ENCODE measurements at regions of chr12 and their contacts with region 1.

Region 1: GRCh38 chr12:96399919-96400797 is at the start of gene CDK17:
- DNase-seq: peak in 1 of 2 donors; percentile 90
- H3K4me3 ChIP-seq: peak within 1 kb of the TSS; percentile 84 to 88
- H3K27ac ChIP-seq: peak within 1 kb of the TSS; percentile 99
- H3K4me1 ChIP-seq: peaks cover 25% of the 10 kb centered on the region
- H3K27me3 ChIP-seq: no peaks in the 10 kb centered on the region
- CTCF ChIP-seq: peak in 2 of 3 experiments; percentile 40 to 50
- POLR2A ChIP-seq: peak in 1 of 2 donors; percentile 81
- total RNA-seq, gene CDK17: 72.4 TPM

Region 2: GRCh38 chr12:95460896-95461661 is 939.1 kb before region 1 on chr12:
- intact Hi-C with region 1: loop called (anchors 5 kb)
- DNase-seq: no peak
- H3K4me3 ChIP-seq: no peak overlapping the region
- H3K27ac ChIP-seq: no peak overlapping the region
- H3K4me1 ChIP-seq: no peaks in the 10 kb centered on the region
- H3K27me3 ChIP-seq: no peaks in the 10 kb centered on the region
- CTCF ChIP-seq: no peak
- POLR2A ChIP-seq: no peak

Region 3: DNA sequence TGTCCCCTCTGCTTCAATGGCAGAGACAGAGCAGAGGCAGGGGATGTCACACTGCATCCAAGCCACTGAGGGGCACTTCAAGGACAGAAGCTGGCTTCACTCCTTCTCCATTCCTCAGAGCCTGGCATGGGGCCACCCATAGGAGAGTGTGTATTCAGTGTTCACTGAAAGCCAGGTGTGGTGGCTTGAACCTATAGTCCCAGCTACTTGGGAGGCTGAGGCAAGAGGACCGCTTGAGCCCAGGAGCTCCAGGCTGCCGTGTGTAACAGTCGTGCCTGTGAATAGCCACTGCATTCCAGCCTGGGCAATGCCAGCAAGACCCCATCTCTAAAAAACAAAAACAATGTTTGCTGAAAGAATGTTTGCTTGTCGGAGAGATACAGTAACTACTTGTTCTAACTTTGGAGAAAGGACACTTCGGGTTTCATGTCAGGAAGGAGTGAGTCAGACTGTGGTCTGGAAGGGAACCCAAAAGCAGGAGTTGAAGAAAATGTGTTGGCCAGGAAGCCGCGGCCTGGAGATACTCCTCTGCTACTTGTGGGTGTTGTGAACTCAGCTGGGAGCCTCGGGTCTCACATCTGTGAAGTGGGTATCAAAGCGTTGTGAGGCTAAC is 162.6 kb before region 1 on chr12:
- intact Hi-C with region 1: loop called (anchors 10 kb)
- DNase-seq: no peak
- H3K4me3 ChIP-seq: peak overlapping the region in 1 of 2 donors; percentile 1
- H3K27ac ChIP-seq: peak overlapping the region; percentile 71
- H3K4me1 ChIP-seq: peaks cover 90% of the 10 kb centered on the region
- H3K27me3 ChIP-seq: no peaks in the 10 kb centered on the region
- CTCF ChIP-seq: no peak
- POLR2A ChIP-seq: no peak

Region 4: DNA sequence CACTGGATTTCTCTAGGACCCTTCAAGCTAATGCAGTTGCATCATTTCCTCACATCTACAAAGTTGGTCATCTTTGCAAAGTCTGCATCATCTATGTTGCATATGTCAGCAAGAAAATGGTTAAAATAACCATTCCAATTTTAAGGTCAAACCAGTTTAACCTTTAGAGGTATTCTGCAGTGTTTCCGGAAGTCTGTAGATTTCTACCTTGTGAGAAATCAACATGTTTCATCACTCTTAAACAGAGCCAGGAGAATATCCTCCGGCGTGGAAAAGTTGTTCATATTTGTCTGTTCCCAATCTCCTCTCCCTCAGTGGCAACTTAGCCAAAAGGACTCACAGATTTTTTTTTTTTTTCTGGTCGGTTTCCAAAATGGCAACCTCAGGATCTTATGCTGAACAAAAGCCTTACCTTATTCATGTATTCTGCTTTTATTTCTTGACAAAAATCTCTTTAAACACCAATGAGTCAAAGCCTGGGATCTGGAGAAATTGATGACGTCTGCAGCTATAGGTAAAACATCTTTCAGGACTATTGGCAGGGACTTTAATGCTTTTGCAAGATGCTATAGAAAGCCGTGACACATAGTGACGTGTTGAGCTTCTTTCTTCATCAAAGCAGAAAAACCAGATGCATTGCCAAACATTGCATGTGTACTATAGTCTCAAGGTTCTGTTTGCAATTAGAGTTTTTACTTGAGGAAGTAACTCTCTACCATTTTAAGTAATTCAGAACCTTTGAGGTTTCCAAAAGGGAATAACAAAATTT is 16.1 kb after region 1 on chr12:
- intact Hi-C with region 1: no loop called
- DNase-seq: no peak
- H3K4me3 ChIP-seq: no peak overlapping the region
- H3K27ac ChIP-seq: no peak overlapping the region
- H3K4me1 ChIP-seq: peaks cover 23% of the 10 kb centered on the region
- H3K27me3 ChIP-seq: no peaks in the 10 kb centered on the region
- CTCF ChIP-seq: no peak
- POLR2A ChIP-seq: no peak

Region 5: DNA sequence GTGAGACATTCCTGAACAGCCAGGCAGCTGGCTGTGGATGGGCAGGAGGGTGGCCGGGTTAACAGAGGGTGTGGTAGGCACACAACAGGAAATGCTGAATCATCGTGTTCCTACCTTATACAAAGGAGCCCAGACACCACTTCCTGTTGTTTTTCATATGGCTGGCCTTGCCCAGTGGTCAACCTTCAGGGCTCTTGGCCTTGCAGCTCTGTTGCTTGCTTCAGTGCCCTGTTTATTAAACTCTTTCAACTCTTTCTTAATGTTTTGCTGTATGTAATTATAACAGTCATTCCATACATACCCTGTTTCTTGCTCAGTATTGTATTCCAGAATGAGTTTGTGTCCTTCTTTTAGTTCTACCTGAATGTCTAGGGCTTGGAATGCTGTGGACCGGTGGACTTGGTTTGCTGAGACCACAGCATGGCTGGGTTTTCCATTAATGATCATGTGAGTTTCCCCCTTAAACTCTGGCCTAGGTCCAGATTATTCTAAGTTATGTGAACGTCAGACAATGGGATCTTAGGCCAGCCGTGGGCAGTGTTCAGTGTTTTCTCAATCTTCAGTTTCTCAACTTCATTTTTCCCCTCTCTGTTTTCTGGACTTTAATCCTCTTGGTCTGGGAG is 101.1 kb after region 1 on chr12:
- intact Hi-C with region 1: loop called (anchors 10 kb)
- DNase-seq: no peak
- H3K4me3 ChIP-seq: no peak overlapping the region
- H3K27ac ChIP-seq: peak overlapping the region; percentile 45
- H3K4me1 ChIP-seq: no peaks in the 10 kb centered on the region
- H3K27me3 ChIP-seq: no peaks in the 10 kb centered on the region
- CTCF ChIP-seq: no peak
- POLR2A ChIP-seq: no peak

Measured in vagina (tissue), 2 donors.